ENCODE measurements at regions of chr11 and their contacts with region 1.

Region 1: GRCh38 chr11:79371152-79371551 is 69.7 kb downstream of the TENM4 start:
- DNase-seq: peak; percentile 65
- H3K4me3 ChIP-seq: no peak overlapping the region
- H3K27ac ChIP-seq: no peak overlapping the region
- H3K4me1 ChIP-seq: peaks cover 20% of the 10 kb centered on the region
- H3K27me3 ChIP-seq: no peaks in the 10 kb centered on the region
- CTCF ChIP-seq: peak; percentile 77

Region 2: DNA sequence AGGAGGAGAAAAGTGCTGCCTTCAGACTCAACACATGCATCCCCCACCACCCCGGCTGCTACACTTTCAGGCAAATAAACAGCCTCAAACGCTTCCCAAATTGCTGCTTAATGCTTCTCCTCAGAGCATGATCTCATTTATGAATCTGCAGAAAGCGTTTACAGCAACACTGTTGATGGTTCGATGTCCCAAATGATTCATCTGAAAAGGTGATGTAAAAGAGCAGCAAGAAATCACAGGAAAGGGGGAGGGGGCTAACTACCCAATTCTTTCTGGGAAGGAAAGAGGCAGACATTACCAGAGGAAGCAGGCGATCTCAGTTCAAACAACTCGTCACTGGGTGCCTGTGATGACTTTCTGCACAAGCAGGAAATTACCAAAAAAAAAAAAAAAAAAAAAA is 49.9 kb before region 1 on chr11:
- CTCF ChIA-PET with region 1: no interaction called
- dilution Hi-C with region 1: no loop called
- in situ Hi-C with region 1: no loop called
- intact Hi-C with region 1: loop called (anchors 2 kb)
- DNase-seq: no peak
- H3K4me3 ChIP-seq: no peak overlapping the region
- H3K27ac ChIP-seq: no peak overlapping the region
- H3K4me1 ChIP-seq: no peaks in the 10 kb centered on the region
- H3K27me3 ChIP-seq: no peaks in the 10 kb centered on the region
- CTCF ChIP-seq: no peak

Region 3: GRCh38 chr11:79419120-79419519 is 48.0 kb after region 1 on chr11:
- CTCF ChIA-PET with region 1: no interaction called
- dilution Hi-C with region 1: no loop called
- in situ Hi-C with region 1: no loop called
- intact Hi-C with region 1: loop called (anchors 2 kb)
- DNase-seq: peak; percentile 99
- H3K4me3 ChIP-seq: no peak overlapping the region
- H3K27ac ChIP-seq: peak overlapping the region; percentile 80
- H3K4me1 ChIP-seq: peaks cover 55% of the 10 kb centered on the region
- H3K27me3 ChIP-seq: no peaks in the 10 kb centered on the region
- CTCF ChIP-seq: no peak